K562 (cell line): ENCODE measurements at regions of chr5 and their contacts with region 1.

Region 1: GRCh38 chr5:138035605-138036537 is 3.0 kb upstream of the FAM13B start:
- DNase-seq: peak; percentile 67 to 91 (median 72)
- ATAC-seq: peak; percentile 80
- H3K4me3 ChIP-seq: no peak overlapping the region
- H3K27ac ChIP-seq: no peak overlapping the region
- H3K4me1 ChIP-seq: peaks cover 10 to 13% of the 10 kb centered on the region in 2 experiments; a peak in 4 of 5 replicates
- H3K27me3 ChIP-seq: no peaks in the 10 kb centered on the region
- CTCF ChIP-seq: peak; percentile 96 to 100 (median 99)
- EP300 ChIP-seq: peak; percentile 45; the same call in 1 of the 2 replicates
- POLR2A ChIP-seq: no peak
- RAD21 ChIP-seq: peak; percentile 71 to 84

Region 2: DNA sequence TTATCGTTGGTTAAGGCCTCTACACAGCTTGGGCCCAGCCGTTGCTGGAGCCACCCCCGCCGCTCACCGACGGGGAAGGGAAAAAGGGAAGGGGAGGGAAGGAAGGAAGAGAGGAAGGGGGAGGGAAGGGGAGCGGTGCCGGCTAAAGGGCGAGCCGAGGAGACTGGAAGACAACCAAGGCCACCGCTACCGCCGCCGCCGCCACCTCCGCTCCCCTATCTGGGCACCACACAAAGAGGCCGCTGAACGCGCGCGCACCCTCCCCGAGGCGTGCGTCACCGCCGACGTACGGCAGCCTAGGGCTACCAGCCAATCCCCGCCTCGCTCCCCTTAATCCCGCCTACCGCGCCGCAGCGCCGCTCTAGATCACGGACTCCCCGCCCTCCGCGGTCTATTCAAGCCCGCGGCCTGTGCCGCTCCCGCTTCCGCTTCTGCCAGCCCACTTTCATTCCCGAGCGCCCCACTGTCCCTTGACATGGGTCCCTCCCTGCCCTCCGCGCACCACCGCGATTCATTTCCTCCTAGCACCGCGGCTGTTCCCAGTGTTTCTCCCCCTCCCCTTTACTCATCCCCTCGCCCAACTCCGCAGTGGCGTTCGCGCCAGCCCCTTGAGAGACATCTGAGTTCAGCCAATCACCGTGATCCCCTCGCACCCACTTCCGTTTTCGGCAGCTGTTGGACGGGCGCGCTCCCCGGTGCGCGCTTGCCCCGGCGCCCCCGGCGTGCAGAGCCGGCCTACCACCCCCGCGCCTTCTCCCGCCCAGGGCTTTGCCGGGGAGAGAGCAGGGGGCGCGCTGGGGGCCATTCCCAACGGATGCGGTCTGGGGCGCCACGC is 281.5 kb before region 1 on chr5 and contains the start of gene HNRNPA0:
- CTCF ChIA-PET with region 1: no interaction called
- POLR2A ChIA-PET with region 1: no interaction called
- in situ Hi-C with region 1: no loop called
- intact Hi-C with region 1: loop called (anchors 5 kb)
- DNase-seq: peak; percentile 94 to 98 (median 96)
- ATAC-seq: peak; percentile 91
- H3K4me3 ChIP-seq: peak within 1 kb of the TSS; percentile 76
- H3K27ac ChIP-seq: peak within 1 kb of the TSS; percentile 97
- H3K4me1 ChIP-seq: peaks cover 0 to 16% of the 10 kb centered on the region in 2 experiments; a peak in 3 of 5 replicates
- H3K27me3 ChIP-seq: peaks cover 5 to 6% of the 10 kb centered on the region in 2 experiments; a peak in 3 of 5 replicates
- CTCF ChIP-seq: peak in 2 of 3 experiments; percentile 17 to 33; a peak in 2 of 6 replicates
- EP300 ChIP-seq: peak; percentile 96
- POLR2A ChIP-seq: peak; percentile 98
- RAD21 ChIP-seq: no peak
- polyA plus RNA-seq, gene HNRNPA0: 5.0 to 5.7 TPM

Region 3: GRCh38 chr5:137954131-137954879 is 81.6 kb before region 1 on chr5:
- CTCF ChIA-PET with region 1: interaction called, 3 read pairs
- POLR2A ChIA-PET with region 1: no interaction called
- in situ Hi-C with region 1: no loop called
- intact Hi-C with region 1: loop called (anchors 5 kb)
- DNase-seq: peak in 1 of 4 experiments; percentile 9
- ATAC-seq: no peak
- H3K4me3 ChIP-seq: no peak overlapping the region
- H3K27ac ChIP-seq: no peak overlapping the region
- H3K4me1 ChIP-seq: no peaks in the 10 kb centered on the region
- H3K27me3 ChIP-seq: no peaks in the 10 kb centered on the region
- CTCF ChIP-seq: no peak
- EP300 ChIP-seq: no peak
- POLR2A ChIP-seq: no peak
- RAD21 ChIP-seq: no peak

Region 4: GRCh38 chr5:138065102-138065501 is 29.2 kb after region 1 on chr5:
- CTCF ChIA-PET with region 1: interaction called, 35 read pairs
- POLR2A ChIA-PET with region 1: interaction called, 3 read pairs
- in situ Hi-C with region 1: no loop called
- intact Hi-C with region 1: loop called (anchors 1 kb)
- DNase-seq: peak in 2 of 4 experiments; percentile 33 to 41
- ATAC-seq: peak; percentile 80
- H3K4me3 ChIP-seq: no peak overlapping the region
- H3K27ac ChIP-seq: no peak overlapping the region
- H3K4me1 ChIP-seq: peaks cover 0 to 3% of the 10 kb centered on the region in 2 experiments; a peak in 2 of 5 replicates
- H3K27me3 ChIP-seq: no peaks in the 10 kb centered on the region
- CTCF ChIP-seq: peak; percentile 68 to 76 (median 75)
- EP300 ChIP-seq: no peak
- POLR2A ChIP-seq: no peak
- RAD21 ChIP-seq: peak in 1 of 2 experiments; percentile 54; a peak in 2 of 4 replicates

Region 5: GRCh38 chr5:138138949-138139780 is 103.3 kb after region 1 on chr5 and contains the start of gene NME5:
- CTCF ChIA-PET with region 1: interaction called, 17 read pairs
- POLR2A ChIA-PET with region 1: interaction called, 3 read pairs
- in situ Hi-C with region 1: no loop called
- intact Hi-C with region 1: no loop called
- DNase-seq: peak in 1 of 4 experiments; percentile 16
- ATAC-seq: peak; percentile 32; the same call in 1 of the 3 replicates
- H3K4me3 ChIP-seq: no peak within 1 kb of the TSS
- H3K27ac ChIP-seq: no peak within 1 kb of the TSS
- H3K4me1 ChIP-seq: no peaks in the 10 kb centered on the region
- H3K27me3 ChIP-seq: peaks cover 18 to 27% of the 10 kb centered on the region in 2 experiments; a peak in 4 of 5 replicates
- CTCF ChIP-seq: no peak
- EP300 ChIP-seq: no peak
- POLR2A ChIP-seq: no peak
- RAD21 ChIP-seq: no peak
- polyA plus RNA-seq, gene NME5: not detected